Activated CD4-positive, alpha-beta memory T cell treated with anti-CD3 and anti-CD28 coated beads, Interleukin-2, amount 10 ng/mL, durations not matched to agents 7 days and 5 days (primary cell): ENCODE measurements at regions of chr1 and their contacts with region 1.

Region 1: GRCh38 chr1:226711976-226712741 is 26.9 kb downstream of the ITPKB start:
- DNase-seq: peak; percentile 69
- H3K4me3 Mint-ChIP-seq: peak overlapping the region; percentile 51
- H3K27ac Mint-ChIP-seq: peak overlapping the region; percentile 65
- H3K4me1 Mint-ChIP-seq: peaks cover 71% of the 10 kb centered on the region
- H3K27me3 Mint-ChIP-seq: no peaks in the 10 kb centered on the region

Region 2: DNA sequence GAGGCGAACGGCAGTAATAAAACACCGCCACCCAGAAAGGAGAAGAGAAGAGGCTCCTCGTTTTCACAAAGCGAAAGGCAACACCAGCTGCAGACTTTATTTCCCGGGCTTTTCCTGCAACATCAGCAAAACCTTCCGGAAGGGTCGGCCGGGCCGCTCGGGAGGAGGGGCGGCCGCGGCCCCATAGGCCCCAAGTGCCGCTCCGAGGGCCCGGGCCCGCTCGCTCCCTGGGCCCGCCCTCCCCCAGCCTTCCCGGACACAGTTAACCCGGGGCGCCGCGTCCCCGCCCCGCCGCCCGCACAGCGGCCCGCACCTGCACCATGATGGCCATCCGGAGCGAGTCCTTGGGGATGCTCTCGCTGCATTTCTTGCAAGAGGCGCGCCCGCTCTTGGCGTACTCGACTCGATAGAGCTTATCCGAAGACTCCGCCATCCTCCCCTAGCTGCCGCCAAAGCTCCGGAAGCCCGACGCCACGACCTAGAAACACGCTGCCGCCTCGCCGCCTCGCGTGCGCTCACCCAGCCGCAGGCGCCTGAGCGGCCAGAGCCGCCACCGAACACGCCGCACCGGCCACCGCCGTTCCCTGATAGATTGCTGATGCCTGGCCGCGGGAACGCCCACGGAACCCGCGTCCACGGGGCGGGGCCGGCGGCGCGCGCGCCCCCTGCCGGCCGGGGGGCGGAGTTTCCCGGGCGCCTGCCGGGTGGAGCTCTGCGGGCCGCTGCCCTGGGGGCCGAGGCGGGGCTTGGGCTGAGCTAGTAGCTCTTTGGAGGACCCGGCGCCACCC is 304.5 kb before region 1 on chr1 and contains the start of gene PARP1:
- CTCF ChIA-PET with region 1: no interaction called
- POLR2A ChIA-PET with region 1: no interaction called
- DNase-seq: peak; percentile 92
- H3K4me3 Mint-ChIP-seq: peak within 1 kb of the TSS; percentile 85
- H3K27ac Mint-ChIP-seq: peak within 1 kb of the TSS; percentile 89
- H3K4me1 Mint-ChIP-seq: peaks cover 35% of the 10 kb centered on the region
- H3K27me3 Mint-ChIP-seq: peaks cover 2% of the 10 kb centered on the region
- total RNA-seq, gene PARP1: 191 to 194 TPM

Region 3: GRCh38 chr1:226731257-226731893 is 19.2 kb after region 1 on chr1:
- CTCF ChIA-PET with region 1: interaction called, 19 read pairs
- POLR2A ChIA-PET with region 1: no interaction called
- DNase-seq: no peak
- H3K4me3 Mint-ChIP-seq: peak overlapping the region; percentile 70
- H3K27ac Mint-ChIP-seq: peak overlapping the region; percentile 58
- H3K4me1 Mint-ChIP-seq: peaks cover 94% of the 10 kb centered on the region
- H3K27me3 Mint-ChIP-seq: no peaks in the 10 kb centered on the region

Region 4: GRCh38 chr1:226736908-226737818 is 25.0 kb after region 1 on chr1:
- CTCF ChIA-PET with region 1: interaction called, 12 read pairs
- POLR2A ChIA-PET with region 1: no interaction called
- DNase-seq: peak; percentile 62
- H3K4me3 Mint-ChIP-seq: peak overlapping the region; percentile 87
- H3K27ac Mint-ChIP-seq: peak overlapping the region; percentile 92
- H3K4me1 Mint-ChIP-seq: peaks cover 57% of the 10 kb centered on the region
- H3K27me3 Mint-ChIP-seq: no peaks in the 10 kb centered on the region